ENCODE measurements at regions of chr12 and their contacts with region 1.

Region 1: GRCh38 chr12:8860165-8860961 is 37.9 kb downstream of the A2ML1 start:
- DNase-seq: peak; percentile 51
- H3K4me3 Mint-ChIP-seq: no peak overlapping the region
- H3K27ac Mint-ChIP-seq: no peak overlapping the region
- H3K4me1 Mint-ChIP-seq: no peaks in the 10 kb centered on the region
- H3K27me3 Mint-ChIP-seq: peaks cover 4% of the 10 kb centered on the region

Region 2: GRCh38 chr12:8544295-8544694 is 316.1 kb before region 1 on chr12:
- CTCF ChIA-PET with region 1: interaction called, 17 read pairs
- DNase-seq: peak; percentile 85
- H3K4me3 Mint-ChIP-seq: no peak overlapping the region
- H3K27ac Mint-ChIP-seq: no peak overlapping the region
- H3K4me1 Mint-ChIP-seq: peaks cover 10% of the 10 kb centered on the region
- H3K27me3 Mint-ChIP-seq: peaks cover 30% of the 10 kb centered on the region

Region 3: GRCh38 chr12:8658346-8658745 is 202.0 kb before region 1 on chr12:
- CTCF ChIA-PET with region 1: interaction called, 14 read pairs
- DNase-seq: no peak
- H3K4me3 Mint-ChIP-seq: no peak overlapping the region
- H3K27ac Mint-ChIP-seq: no peak overlapping the region
- H3K4me1 Mint-ChIP-seq: no peaks in the 10 kb centered on the region
- H3K27me3 Mint-ChIP-seq: peaks cover 29% of the 10 kb centered on the region

Region 4: DNA sequence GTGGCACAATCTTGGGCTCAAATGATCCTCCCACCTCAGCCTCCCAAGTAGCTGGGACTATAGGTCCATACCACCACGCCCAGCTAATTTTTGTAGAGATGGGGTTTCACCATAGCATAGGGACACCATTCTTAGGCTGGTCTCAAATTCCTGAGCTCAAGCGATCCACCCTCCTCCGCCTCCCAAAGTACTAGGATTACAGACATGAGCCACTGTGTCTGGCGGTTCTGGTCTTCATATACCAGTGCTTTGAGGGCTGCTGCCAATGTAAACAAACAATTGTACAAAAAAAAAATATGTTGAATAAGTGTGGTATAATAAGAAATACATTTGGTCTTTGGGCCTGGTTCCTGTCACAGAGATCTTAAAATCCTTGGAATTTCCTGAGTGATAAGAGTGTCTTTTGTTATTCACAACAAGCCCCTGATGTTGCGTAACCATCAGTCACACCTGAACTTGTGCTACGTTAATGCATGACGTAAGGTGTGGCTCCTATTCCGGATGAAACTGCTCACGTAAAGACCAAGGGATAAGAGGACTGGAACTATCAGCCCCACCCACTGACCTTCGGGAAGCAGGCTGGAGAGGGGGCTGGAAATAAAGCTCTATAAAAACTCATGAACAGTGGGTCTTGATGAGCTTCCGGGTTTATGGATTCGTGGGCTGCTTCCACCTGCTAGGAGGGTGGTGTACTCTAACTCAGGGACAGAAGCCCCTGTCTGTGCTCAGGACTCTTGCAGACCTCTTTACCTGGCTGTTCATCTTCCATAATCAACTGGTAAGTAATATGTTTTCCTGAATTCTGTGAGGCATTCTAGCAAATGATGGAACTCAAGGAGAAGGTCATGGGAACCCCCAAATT is 179.1 kb before region 1 on chr12:
- CTCF ChIA-PET with region 1: interaction called, 21 read pairs
- DNase-seq: no peak
- H3K4me3 Mint-ChIP-seq: no peak overlapping the region
- H3K27ac Mint-ChIP-seq: no peak overlapping the region
- H3K4me1 Mint-ChIP-seq: peaks cover 4% of the 10 kb centered on the region
- H3K27me3 Mint-ChIP-seq: peaks cover 13% of the 10 kb centered on the region

Region 5: DNA sequence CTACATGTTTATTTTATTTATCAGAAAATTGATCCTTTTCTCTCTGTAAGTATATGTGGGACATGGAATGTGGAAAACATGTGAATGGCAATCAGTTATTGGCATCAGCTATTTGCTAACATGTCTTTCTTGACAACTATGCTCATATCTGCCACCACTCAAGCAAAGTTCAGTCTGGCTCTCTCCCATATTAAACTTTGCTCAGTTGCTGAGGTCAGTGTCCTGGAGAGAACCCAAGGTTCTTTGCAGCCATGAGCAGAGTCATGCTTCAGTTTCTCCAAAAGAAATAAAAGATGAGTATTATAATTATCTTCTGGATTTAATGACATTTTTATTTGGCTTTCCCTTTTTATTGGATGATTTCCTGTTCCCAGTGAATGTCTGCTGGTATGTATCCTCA is 212.7 kb after region 1 on chr12:
- CTCF ChIA-PET with region 1: no interaction called
- DNase-seq: no peak
- H3K4me3 Mint-ChIP-seq: no peak overlapping the region
- H3K27ac Mint-ChIP-seq: no peak overlapping the region
- H3K4me1 Mint-ChIP-seq: no peaks in the 10 kb centered on the region
- H3K27me3 Mint-ChIP-seq: peaks cover 9% of the 10 kb centered on the region

Measured in activated naive CD4-positive, alpha-beta T cell treated with anti-CD3 and anti-CD28 coated beads, Interleukin-2, amount 10 ng/mL, durations not matched to agents 7 days and 5 days (primary cell).